ENCODE measurements at regions of chr7 and their contacts with region 1.

Region 1: GRCh38 chr7:55964261-55965099 is at the start of gene NIPSNAP2:
- DNase-seq: peak; percentile 87 to 94 (median 92)
- ATAC-seq: peak; percentile 95
- H3K4me3 ChIP-seq: peak within 1 kb of the TSS; percentile 91
- H3K27ac ChIP-seq: peak within 1 kb of the TSS; percentile 90
- H3K4me1 ChIP-seq: peaks cover 12 to 13% of the 10 kb centered on the region in 2 experiments; a peak in 4 of 5 replicates
- H3K27me3 ChIP-seq: no peaks in the 10 kb centered on the region
- CTCF ChIP-seq: peak in 2 of 3 experiments; percentile 57 to 75; a peak in 4 of 6 replicates
- EP300 ChIP-seq: no peak
- POLR2A ChIP-seq: peak; percentile 74; the same call in 1 of the 2 replicates
- RAD21 ChIP-seq: peak in 1 of 2 experiments; percentile 68; a peak in 3 of 4 replicates
- polyA plus RNA-seq, gene NIPSNAP2: 24.9 to 30.4 TPM

Region 2: GRCh38 chr7:55572378-55573233 is 391.9 kb before region 1 on chr7 and contains the start of gene VOPP1:
- CTCF ChIA-PET with region 1: no interaction called
- POLR2A ChIA-PET with region 1: no interaction called
- in situ Hi-C with region 1: no loop called
- intact Hi-C with region 1: loop called (anchors 10 kb)
- DNase-seq: peak; percentile 81 to 95 (median 94)
- ATAC-seq: peak; percentile 83
- H3K4me3 ChIP-seq: peak within 1 kb of the TSS; percentile 83
- H3K27ac ChIP-seq: peak within 1 kb of the TSS; percentile 82
- H3K4me1 ChIP-seq: peaks cover 18 to 35% of the 10 kb centered on the region in 2 experiments
- H3K27me3 ChIP-seq: no peaks in the 10 kb centered on the region
- CTCF ChIP-seq: no peak
- EP300 ChIP-seq: no peak
- POLR2A ChIP-seq: peak; percentile 3; the same call in 1 of the 2 replicates
- RAD21 ChIP-seq: no peak
- polyA plus RNA-seq, gene VOPP1: 8.2 to 11.0 TPM

Region 3: GRCh38 chr7:56287421-56288138 is 323.1 kb after region 1 on chr7:
- CTCF ChIA-PET with region 1: no interaction called
- POLR2A ChIA-PET with region 1: no interaction called
- in situ Hi-C with region 1: no loop called
- intact Hi-C with region 1: no loop called
- DNase-seq: no peak
- ATAC-seq: no peak
- H3K4me3 ChIP-seq: no peak overlapping the region
- H3K27ac ChIP-seq: no peak overlapping the region
- H3K4me1 ChIP-seq: no peaks in the 10 kb centered on the region
- H3K27me3 ChIP-seq: no peaks in the 10 kb centered on the region
- CTCF ChIP-seq: no peak
- EP300 ChIP-seq: no peak
- POLR2A ChIP-seq: no peak
- RAD21 ChIP-seq: no peak